ENCODE measurements at regions of chr16 and their contacts with region 1.

Region 1: DNA sequence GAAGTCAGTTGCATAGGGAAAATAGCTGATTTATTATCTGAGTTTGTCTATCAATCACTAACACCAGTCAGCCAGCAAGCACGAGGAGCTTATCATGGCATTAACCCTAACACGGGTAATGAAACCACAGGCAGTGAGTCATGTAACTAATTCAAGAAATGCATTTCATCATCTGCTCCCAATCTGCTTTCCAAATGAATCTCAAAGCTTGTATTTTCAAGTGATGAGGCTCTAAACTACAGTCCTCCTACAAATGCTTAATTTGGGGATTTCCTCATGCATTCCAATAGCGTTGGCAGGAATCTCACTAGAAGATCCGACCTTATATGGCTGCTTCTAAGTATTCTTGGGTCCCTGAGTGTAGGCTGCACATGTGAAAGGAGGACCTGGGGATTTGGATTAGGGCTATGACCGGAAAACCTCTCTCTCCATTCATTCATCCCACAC is 118.4 kb upstream of the HSBP1 start:
- DNase-seq: peak; percentile 91
- H3K4me3 ChIP-seq: no peak overlapping the region
- H3K27ac ChIP-seq: no peak overlapping the region
- H3K4me1 ChIP-seq: peaks cover 15% of the 10 kb centered on the region
- H3K27me3 ChIP-seq: no peaks in the 10 kb centered on the region
- CTCF ChIP-seq: no peak

Region 2: DNA sequence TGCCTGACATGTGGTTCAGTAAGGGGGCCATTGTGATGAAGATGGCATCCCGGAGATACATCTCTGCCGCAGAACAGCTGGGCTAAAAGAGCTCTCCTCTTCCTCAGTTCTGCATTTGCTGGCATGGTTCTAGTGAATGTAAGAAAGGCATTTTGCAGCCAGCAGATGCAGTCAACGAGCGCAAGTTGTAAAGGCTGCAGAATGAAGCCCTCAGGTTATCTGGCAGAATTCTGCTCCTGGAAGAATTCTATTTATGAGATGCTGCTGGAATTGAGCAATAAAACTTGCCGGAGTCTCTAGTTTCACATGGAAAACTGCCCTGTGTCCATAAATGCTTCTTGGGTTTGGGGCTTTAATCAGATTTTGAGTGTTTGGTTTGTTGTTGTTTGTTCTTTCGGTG is 58.4 kb before region 1 on chr16:
- CTCF ChIA-PET with region 1: no interaction called
- dilution Hi-C with region 1: no loop called
- in situ Hi-C with region 1: no loop called
- intact Hi-C with region 1: no loop called
- DNase-seq: no peak
- H3K4me3 ChIP-seq: no peak overlapping the region
- H3K27ac ChIP-seq: no peak overlapping the region
- H3K4me1 ChIP-seq: no peaks in the 10 kb centered on the region
- H3K27me3 ChIP-seq: no peaks in the 10 kb centered on the region
- CTCF ChIP-seq: no peak

Region 3: GRCh38 chr16:83661656-83662055 is 27.8 kb before region 1 on chr16:
- CTCF ChIA-PET with region 1: no interaction called
- dilution Hi-C with region 1: no loop called
- in situ Hi-C with region 1: no loop called
- intact Hi-C with region 1: loop called (anchors 2 kb)
- DNase-seq: peak; percentile 85
- H3K4me3 ChIP-seq: no peak overlapping the region
- H3K27ac ChIP-seq: no peak overlapping the region
- H3K4me1 ChIP-seq: peaks cover 17% of the 10 kb centered on the region
- H3K27me3 ChIP-seq: no peaks in the 10 kb centered on the region
- CTCF ChIP-seq: no peak

Region 4: DNA sequence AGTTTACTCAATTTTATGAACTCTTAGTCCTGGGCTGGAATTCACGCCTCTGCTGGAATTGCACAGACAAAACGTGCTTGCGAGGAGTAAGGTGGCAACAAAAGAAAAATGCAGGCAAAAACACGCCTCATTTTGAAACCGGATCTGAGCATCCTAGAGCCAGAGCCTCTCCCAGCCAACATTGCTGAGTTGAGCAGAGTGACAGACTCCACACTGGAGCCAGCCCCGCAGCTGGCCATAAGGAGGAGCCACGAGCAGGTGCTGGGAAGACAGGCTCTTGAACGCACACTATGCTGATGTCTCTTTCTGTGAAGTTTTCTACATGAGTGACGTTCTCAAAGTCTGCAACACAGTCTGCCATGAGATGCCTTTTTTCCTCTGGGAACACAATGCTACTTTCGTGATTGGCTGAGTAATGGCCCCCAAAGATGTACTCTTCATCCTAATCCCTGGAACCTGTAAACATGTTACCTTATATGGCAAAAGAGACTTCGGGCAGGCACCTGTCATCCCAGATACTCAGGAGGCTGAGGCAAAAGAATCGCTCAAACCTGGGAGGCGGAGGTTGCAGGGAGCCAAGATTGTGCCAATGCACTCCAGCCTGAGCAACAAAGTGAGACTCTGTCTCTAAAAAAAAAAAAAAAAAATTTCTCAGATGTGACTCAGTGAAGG is 103.9 kb after region 1 on chr16:
- CTCF ChIA-PET with region 1: no interaction called
- dilution Hi-C with region 1: no loop called
- in situ Hi-C with region 1: no loop called
- intact Hi-C with region 1: no loop called
- DNase-seq: no peak
- H3K4me3 ChIP-seq: no peak overlapping the region
- H3K27ac ChIP-seq: no peak overlapping the region
- H3K4me1 ChIP-seq: no peaks in the 10 kb centered on the region
- H3K27me3 ChIP-seq: no peaks in the 10 kb centered on the region
- CTCF ChIP-seq: no peak